ENCODE measurements at regions of chr4 and their contacts with region 1.

Region 1: DNA sequence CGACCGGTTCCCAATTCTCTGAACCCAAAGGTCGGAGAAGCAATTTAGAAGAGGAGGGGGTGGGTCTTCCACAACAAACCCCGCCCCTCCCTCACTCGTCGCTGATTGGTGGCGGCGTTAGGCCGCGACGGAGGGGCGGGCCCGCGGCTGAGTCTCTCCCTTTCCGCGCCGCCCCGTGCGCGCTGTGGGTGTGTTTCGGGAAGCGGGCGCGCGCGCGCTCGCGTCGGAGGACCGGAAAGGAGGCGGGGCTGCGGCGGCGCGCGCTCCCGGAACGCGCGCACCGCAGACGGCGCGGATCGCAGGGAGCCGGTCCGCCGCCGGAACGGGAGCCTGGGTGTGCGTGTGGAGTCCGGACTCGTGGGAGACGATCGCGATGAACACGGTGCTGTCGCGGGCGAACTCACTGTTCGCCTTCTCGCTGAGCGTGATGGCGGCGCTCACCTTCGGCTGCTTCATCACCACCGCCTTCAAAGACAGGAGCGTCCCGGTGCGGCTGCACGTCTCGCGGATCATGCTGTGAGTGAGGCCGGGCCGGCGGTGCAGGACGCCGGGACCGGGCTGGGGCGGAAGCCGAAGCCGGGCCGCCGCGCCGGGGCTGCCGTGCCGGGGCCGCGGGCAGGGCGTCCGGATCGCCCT is at the start of gene SPCS3:
- DNase-seq: peak; percentile 92 to 95 (median 95)
- ATAC-seq: peak; percentile 95
- H3K4me3 ChIP-seq: peak within 1 kb of the TSS; percentile 85
- H3K4me3 Mint-ChIP-seq: peak within 1 kb of the TSS; percentile 83 to 97 (median 92)
- H3K27ac ChIP-seq: peak within 1 kb of the TSS; percentile 91
- H3K27ac Mint-ChIP-seq: peak within 1 kb of the TSS; percentile 91 to 97 (median 92)
- H3K4me1 ChIP-seq: peaks cover 32 to 35% of the 10 kb centered on the region in 2 donors
- H3K4me1 Mint-ChIP-seq: peaks cover 32 to 62% (median 47%) of the 10 kb centered on the region in 7 donors
- H3K27me3 ChIP-seq: no peaks in the 10 kb centered on the region
- H3K27me3 Mint-ChIP-seq: peaks cover 0 to 4% (median 0%) of the 10 kb centered on the region in 5 donors
- total RNA-seq, gene SPCS3: 117 to 215 (median 153) TPM

Region 2: DNA sequence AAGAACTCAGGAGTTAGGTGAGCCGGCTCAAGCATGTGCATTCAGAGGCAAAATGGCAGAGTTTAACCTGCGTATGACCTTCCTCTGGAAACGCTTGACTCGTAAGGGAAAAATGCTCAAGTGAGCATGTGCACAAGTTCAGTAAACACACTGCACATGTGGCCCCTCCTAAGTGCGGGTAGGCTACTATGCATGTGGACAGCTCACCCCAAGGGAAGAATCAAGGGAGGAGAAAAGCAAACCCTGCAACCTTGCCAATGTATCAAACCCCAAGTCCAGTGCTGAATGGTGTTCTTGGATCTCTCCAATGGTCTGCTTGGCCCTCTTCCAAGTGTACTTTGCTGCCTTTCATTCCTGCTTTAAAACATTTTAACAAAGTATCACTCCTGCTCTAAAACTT is 994.6 kb before region 1 on chr4:
- CTCF ChIA-PET with region 1: no interaction called
- POLR2A ChIA-PET with region 1: no interaction called
- intact Hi-C with region 1: no loop called
- DNase-seq: no peak
- ATAC-seq: no peak
- H3K4me3 ChIP-seq: no peak overlapping the region
- H3K4me3 Mint-ChIP-seq: no peak overlapping the region
- H3K27ac ChIP-seq: no peak overlapping the region
- H3K27ac Mint-ChIP-seq: no peak overlapping the region
- H3K4me1 ChIP-seq: no peaks in the 10 kb centered on the region
- H3K4me1 Mint-ChIP-seq: no peaks in the 10 kb centered on the region
- H3K27me3 ChIP-seq: no peaks in the 10 kb centered on the region
- H3K27me3 Mint-ChIP-seq: no peaks in the 10 kb centered on the region

Region 3: GRCh38 chr4:176065435-176066291 is 254.2 kb before region 1 on chr4 and contains the start of gene WDR17:
- CTCF ChIA-PET with region 1: no interaction called
- POLR2A ChIA-PET with region 1: no interaction called
- intact Hi-C with region 1: loop called (anchors 1 to 2 kb)
- DNase-seq: peak; percentile 42 to 81 (median 70)
- ATAC-seq: peak; percentile 95
- H3K4me3 ChIP-seq: peak within 1 kb of the TSS; percentile 70
- H3K4me3 Mint-ChIP-seq: peak within 1 kb of the TSS; percentile 82 to 95 (median 92)
- H3K27ac ChIP-seq: peak within 1 kb of the TSS; percentile 12
- H3K27ac Mint-ChIP-seq: peak within 1 kb of the TSS in 6 of 9 donors; percentile 15 to 76 (median 70)
- H3K4me1 ChIP-seq: peaks cover 4 to 5% of the 10 kb centered on the region in 2 donors
- H3K4me1 Mint-ChIP-seq: peaks cover 11 to 15% (median 13%) of the 10 kb centered on the region in 7 donors
- H3K27me3 ChIP-seq: no peaks in the 10 kb centered on the region
- H3K27me3 Mint-ChIP-seq: peaks cover 0 to 38% (median 25%) of the 10 kb centered on the region in 5 donors
- total RNA-seq, gene WDR17: 0.59 to 1.5 (median 1.1) TPM

Region 4: GRCh38 chr4:176302283-176303275 is 17.2 kb before region 1 on chr4:
- CTCF ChIA-PET with region 1: no interaction called
- POLR2A ChIA-PET with region 1: no interaction called
- intact Hi-C with region 1: no loop called
- DNase-seq: no peak
- ATAC-seq: no peak
- H3K4me3 ChIP-seq: no peak overlapping the region
- H3K4me3 Mint-ChIP-seq: no peak overlapping the region
- H3K27ac ChIP-seq: no peak overlapping the region
- H3K27ac Mint-ChIP-seq: no peak overlapping the region
- H3K4me1 ChIP-seq: no peaks in the 10 kb centered on the region
- H3K4me1 Mint-ChIP-seq: no peaks in the 10 kb centered on the region
- H3K27me3 ChIP-seq: peaks cover 0 to 3% of the 10 kb centered on the region in 2 donors
- H3K27me3 Mint-ChIP-seq: peaks cover 19 to 38% (median 30%) of the 10 kb centered on the region in 5 donors

Region 5: GRCh38 chr4:176902710-176903323 is 583.0 kb after region 1 on chr4:
- CTCF ChIA-PET with region 1: no interaction called
- POLR2A ChIA-PET with region 1: no interaction called
- intact Hi-C with region 1: loop called in 1 of 2 experiments (anchors 10 kb)
- DNase-seq: no peak
- ATAC-seq: no peak
- H3K4me3 ChIP-seq: no peak overlapping the region
- H3K4me3 Mint-ChIP-seq: peak overlapping the region in 1 of 10 donors; percentile 45
- H3K27ac ChIP-seq: no peak overlapping the region
- H3K27ac Mint-ChIP-seq: peak overlapping the region in 1 of 9 donors; percentile 31
- H3K4me1 ChIP-seq: no peaks in the 10 kb centered on the region
- H3K4me1 Mint-ChIP-seq: peaks cover 0 to 17% (median 0%) of the 10 kb centered on the region in 7 donors
- H3K27me3 ChIP-seq: no peaks in the 10 kb centered on the region
- H3K27me3 Mint-ChIP-seq: peaks cover 0 to 6% (median 0%) of the 10 kb centered on the region in 5 donors

Measured in naive thymus-derived CD4-positive, alpha-beta T cell (primary cell).